Endothelial cell of umbilical vein (primary cell): ENCODE measurements at regions of chr9 and their contacts with region 1.

Region 1: GRCh38 chr9:109520478-109521132 is 22.5 kb upstream of the PTPN3 start:
- DNase-seq: peak; percentile 66
- H3K4me3 ChIP-seq: no peak overlapping the region
- H3K27ac ChIP-seq: no peak overlapping the region
- H3K4me1 ChIP-seq: no peaks in the 10 kb centered on the region
- H3K27me3 ChIP-seq: peaks cover 0 to 2% of the 10 kb centered on the region in 2 experiments
- CTCF ChIP-seq: peak; percentile 81 to 83
- POLR2A ChIP-seq: no peak

Region 2: GRCh38 chr9:109244157-109245132 is 276.2 kb before region 1 on chr9:
- CTCF ChIA-PET with region 1: no interaction called
- POLR2A ChIA-PET with region 1: no interaction called
- dilution Hi-C with region 1: no loop called
- intact Hi-C with region 1: loop called (anchors 1 kb)
- DNase-seq: peak; percentile 75
- H3K4me3 ChIP-seq: no peak overlapping the region
- H3K27ac ChIP-seq: no peak overlapping the region
- H3K4me1 ChIP-seq: peaks cover 13% of the 10 kb centered on the region
- H3K27me3 ChIP-seq: no peaks in the 10 kb centered on the region
- CTCF ChIP-seq: peak; percentile 87 to 97
- POLR2A ChIP-seq: no peak

Region 3: DNA sequence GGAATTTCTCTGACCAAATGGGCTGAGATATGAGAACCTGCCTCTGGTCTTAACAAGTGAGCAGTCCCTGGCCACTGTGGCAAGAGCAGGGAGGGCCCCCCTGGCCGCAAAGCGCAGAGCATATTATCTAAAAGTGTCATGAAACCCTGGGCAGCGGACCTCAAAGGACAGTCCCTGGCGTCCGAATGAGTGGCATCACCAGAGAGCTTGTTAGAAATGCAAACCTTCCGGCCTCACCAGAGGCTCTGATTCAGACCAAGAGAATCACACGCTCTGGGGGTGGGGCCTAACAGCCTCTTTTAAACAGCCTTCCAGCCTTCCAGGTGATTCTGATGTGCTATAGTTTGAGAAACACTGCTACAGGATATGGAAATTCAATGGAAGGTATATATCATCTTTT is 33.4 kb before region 1 on chr9:
- CTCF ChIA-PET with region 1: no interaction called
- POLR2A ChIA-PET with region 1: no interaction called
- dilution Hi-C with region 1: no loop called
- intact Hi-C with region 1: no loop called
- DNase-seq: no peak
- H3K4me3 ChIP-seq: no peak overlapping the region
- H3K27ac ChIP-seq: no peak overlapping the region
- H3K4me1 ChIP-seq: no peaks in the 10 kb centered on the region
- H3K27me3 ChIP-seq: peaks cover 0 to 6% of the 10 kb centered on the region in 2 experiments
- CTCF ChIP-seq: no peak
- POLR2A ChIP-seq: no peak